Naive thymus-derived CD4-positive, alpha-beta T cell (primary cell): ENCODE measurements at regions of chr6 and their contacts with region 1.

Region 1: DNA sequence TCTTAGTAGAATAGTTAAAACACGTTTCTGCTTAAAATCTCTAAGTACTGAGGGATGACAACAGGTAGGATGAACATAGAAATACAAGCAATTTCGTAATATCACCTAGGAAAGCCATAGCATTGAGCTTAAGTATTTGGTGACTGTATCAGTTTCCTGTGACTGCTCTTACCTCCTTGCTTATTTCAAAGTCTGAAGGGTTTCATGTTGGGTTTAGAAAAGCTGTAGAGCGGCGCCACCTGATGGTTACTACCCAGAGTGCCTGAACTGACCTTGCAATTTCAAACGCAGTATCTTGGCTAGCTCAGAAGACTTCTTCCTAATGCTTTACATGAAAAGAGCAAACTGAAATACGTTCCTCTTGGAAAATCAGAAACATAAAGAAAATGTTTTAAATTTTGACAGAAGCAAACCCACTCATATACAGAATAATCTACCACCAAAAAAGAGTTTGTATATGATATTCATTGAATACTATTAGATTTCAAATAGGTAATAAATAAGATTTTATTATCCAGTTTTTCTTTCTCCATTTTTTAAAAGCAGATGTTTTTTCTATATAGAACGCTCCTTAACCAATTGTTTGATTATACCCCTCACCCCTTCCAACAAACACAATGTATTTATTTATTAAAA is 82.3 kb upstream of the RIPOR2 start:
- DNase-seq: peak; percentile 52 to 86 (median 81)
- ATAC-seq: peak; percentile 88
- H3K4me3 ChIP-seq: no peak overlapping the region
- H3K4me3 Mint-ChIP-seq: peak overlapping the region in 9 of 10 donors; percentile 35 to 79 (median 67)
- H3K27ac ChIP-seq: peak overlapping the region; percentile 61
- H3K27ac Mint-ChIP-seq: peak overlapping the region; percentile 40 to 98 (median 94)
- H3K4me1 ChIP-seq: peaks cover 9 to 34% of the 10 kb centered on the region in 2 donors
- H3K4me1 Mint-ChIP-seq: peaks cover 25 to 48% (median 39%) of the 10 kb centered on the region in 7 donors
- H3K27me3 ChIP-seq: no peaks in the 10 kb centered on the region
- H3K27me3 Mint-ChIP-seq: no peaks in the 10 kb centered on the region

Region 2: DNA sequence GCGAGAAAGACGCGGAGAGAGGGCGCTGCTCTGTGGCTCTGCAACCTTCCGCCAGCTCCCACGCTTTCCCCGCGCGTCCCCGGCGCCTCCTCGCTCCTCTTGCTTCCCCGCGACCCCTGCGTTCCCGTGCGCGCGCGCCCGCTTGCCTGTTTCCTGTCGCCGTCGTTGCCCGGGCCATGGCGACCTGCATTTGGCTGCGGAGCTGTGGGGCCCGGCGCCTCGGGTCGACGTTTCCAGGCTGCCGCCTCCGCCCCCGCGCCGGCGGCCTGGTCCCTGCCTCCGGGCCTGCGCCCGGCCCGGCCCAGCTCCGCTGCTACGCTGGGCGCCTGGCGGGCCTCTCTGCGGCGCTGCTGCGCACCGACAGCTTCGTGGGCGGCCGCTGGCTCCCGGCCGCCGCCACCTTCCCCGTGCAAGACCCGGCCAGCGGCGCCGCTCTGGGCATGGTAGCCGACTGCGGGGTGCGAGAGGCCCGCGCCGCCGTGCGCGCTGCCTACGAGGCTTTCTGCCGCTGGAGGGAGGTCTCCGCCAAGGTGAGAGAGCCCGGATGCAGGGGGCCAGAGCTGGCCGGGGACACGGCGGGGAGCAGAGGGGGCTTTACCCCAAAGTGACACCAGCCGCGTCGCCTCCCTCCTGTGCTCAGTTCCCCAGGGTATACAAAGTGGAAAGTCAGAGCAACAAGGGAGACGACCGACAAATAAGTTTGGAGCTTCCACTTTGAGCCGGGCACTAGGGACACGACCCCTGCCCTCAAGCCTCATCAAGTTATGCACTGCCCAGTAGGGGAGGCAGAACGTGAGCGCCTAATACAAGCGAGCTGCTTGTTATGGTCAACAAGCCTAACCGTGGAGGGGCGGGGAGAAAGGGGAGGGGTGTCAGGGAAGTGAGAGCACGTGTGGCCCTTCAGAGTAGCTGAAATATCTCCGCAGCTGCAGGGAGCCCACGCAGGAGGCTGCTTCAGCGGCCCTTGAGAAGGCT is 522.9 kb before region 1 on chr6 and contains the start of gene ALDH5A1:
- CTCF ChIA-PET with region 1: no interaction called
- POLR2A ChIA-PET with region 1: no interaction called
- intact Hi-C with region 1: loop called in 1 of 2 experiments (anchors 10 kb)
- DNase-seq: peak; percentile 63 to 86 (median 84)
- ATAC-seq: peak; percentile 89
- H3K4me3 ChIP-seq: peak within 1 kb of the TSS; percentile 74
- H3K4me3 Mint-ChIP-seq: peak within 1 kb of the TSS; percentile 84 to 91 (median 88)
- H3K27ac ChIP-seq: peak within 1 kb of the TSS; percentile 63
- H3K27ac Mint-ChIP-seq: peak within 1 kb of the TSS; percentile 30 to 88 (median 74)
- H3K4me1 ChIP-seq: peaks cover 12 to 15% of the 10 kb centered on the region in 2 donors
- H3K4me1 Mint-ChIP-seq: peaks cover 13 to 50% (median 31%) of the 10 kb centered on the region in 7 donors
- H3K27me3 ChIP-seq: no peaks in the 10 kb centered on the region
- H3K27me3 Mint-ChIP-seq: peaks cover 0 to 2% (median 0%) of the 10 kb centered on the region in 5 donors
- total RNA-seq, gene ALDH5A1: 5.7 to 20.6 (median 8.9) TPM

Region 3: DNA sequence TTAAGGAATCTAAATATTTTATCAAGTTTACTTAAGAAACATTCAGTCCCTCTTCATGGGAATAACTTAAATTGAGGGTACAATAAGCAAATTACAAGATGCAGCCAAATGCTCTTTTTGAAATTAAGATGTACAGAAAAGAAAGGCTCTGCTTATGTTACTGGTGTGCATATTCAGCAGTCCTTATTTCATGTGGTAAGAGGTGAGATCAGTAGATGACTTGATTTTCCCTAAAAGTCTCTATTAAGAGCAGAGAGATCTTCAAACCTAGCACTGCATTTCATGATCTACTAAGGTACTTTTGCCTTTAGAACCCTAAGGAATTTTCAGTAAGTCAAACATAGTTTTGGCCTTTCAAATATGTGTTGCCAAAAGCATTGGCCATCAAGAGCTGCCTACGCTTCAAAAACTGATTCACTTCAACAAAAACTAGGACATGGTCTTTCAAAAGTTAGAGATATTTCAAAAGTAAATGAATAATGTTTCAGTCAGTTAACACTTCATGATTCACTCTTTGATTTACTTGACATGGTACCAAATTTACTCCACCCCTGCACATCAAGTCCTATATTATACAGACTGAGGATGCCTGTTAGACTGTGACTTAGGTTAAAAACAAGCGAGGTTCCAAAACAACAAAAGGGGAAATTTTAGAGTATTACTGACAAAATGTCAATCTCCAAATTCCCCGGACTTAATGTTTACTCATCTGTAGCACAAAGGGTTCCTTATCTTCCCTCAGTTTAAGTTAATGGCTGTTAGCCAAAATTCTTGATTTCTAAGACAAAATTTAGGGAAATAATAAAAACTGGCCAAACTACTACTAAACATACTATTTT is 318.3 kb before region 1 on chr6:
- CTCF ChIA-PET with region 1: interaction called, 4 read pairs
- POLR2A ChIA-PET with region 1: no interaction called
- intact Hi-C with region 1: loop called in 1 of 2 experiments (anchors 5 kb)
- DNase-seq: no peak
- ATAC-seq: no peak
- H3K4me3 ChIP-seq: no peak overlapping the region
- H3K4me3 Mint-ChIP-seq: no peak overlapping the region
- H3K27ac ChIP-seq: no peak overlapping the region
- H3K27ac Mint-ChIP-seq: peak overlapping the region in 8 of 9 donors; percentile 14 to 68 (median 30)
- H3K4me1 ChIP-seq: no peaks in the 10 kb centered on the region
- H3K4me1 Mint-ChIP-seq: peaks cover 8 to 28% (median 17%) of the 10 kb centered on the region in 7 donors
- H3K27me3 ChIP-seq: no peaks in the 10 kb centered on the region
- H3K27me3 Mint-ChIP-seq: no peaks in the 10 kb centered on the region

Region 4: GRCh38 chr6:24855395-24856245 is 162.4 kb before region 1 on chr6:
- CTCF ChIA-PET with region 1: interaction called, 77 read pairs
- POLR2A ChIA-PET with region 1: interaction called, 21 read pairs
- intact Hi-C with region 1: loop called (anchors 1 kb)
- DNase-seq: peak; percentile 25 to 83 (median 74)
- ATAC-seq: peak; percentile 78
- H3K4me3 ChIP-seq: no peak overlapping the region
- H3K4me3 Mint-ChIP-seq: peak overlapping the region in 8 of 10 donors; percentile 48 to 89 (median 62)
- H3K27ac ChIP-seq: peak overlapping the region; percentile 72
- H3K27ac Mint-ChIP-seq: peak overlapping the region; percentile 86 to 99 (median 94)
- H3K4me1 ChIP-seq: peaks cover 47 to 59% of the 10 kb centered on the region in 2 donors
- H3K4me1 Mint-ChIP-seq: peaks cover 51 to 72% (median 66%) of the 10 kb centered on the region in 7 donors
- H3K27me3 ChIP-seq: no peaks in the 10 kb centered on the region
- H3K27me3 Mint-ChIP-seq: no peaks in the 10 kb centered on the region

Region 5: GRCh38 chr6:24949020-24949569 is 69.0 kb before region 1 on chr6:
- CTCF ChIA-PET with region 1: interaction called, 6 read pairs
- POLR2A ChIA-PET with region 1: interaction called, 14 read pairs
- intact Hi-C with region 1: loop called in 1 of 2 experiments (anchors 1 kb)
- DNase-seq: peak in 7 of 9 donors; percentile 67 to 93 (median 83)
- ATAC-seq: peak; percentile 72
- H3K4me3 ChIP-seq: peak overlapping the region; percentile 50
- H3K4me3 Mint-ChIP-seq: peak overlapping the region; percentile 71 to 86 (median 76)
- H3K27ac ChIP-seq: peak overlapping the region; percentile 75
- H3K27ac Mint-ChIP-seq: peak overlapping the region; percentile 92 to 98 (median 95)
- H3K4me1 ChIP-seq: peaks cover 62 to 68% of the 10 kb centered on the region in 2 donors
- H3K4me1 Mint-ChIP-seq: peaks cover 63 to 91% (median 75%) of the 10 kb centered on the region in 7 donors
- H3K27me3 ChIP-seq: no peaks in the 10 kb centered on the region
- H3K27me3 Mint-ChIP-seq: no peaks in the 10 kb centered on the region

Region 6: DNA sequence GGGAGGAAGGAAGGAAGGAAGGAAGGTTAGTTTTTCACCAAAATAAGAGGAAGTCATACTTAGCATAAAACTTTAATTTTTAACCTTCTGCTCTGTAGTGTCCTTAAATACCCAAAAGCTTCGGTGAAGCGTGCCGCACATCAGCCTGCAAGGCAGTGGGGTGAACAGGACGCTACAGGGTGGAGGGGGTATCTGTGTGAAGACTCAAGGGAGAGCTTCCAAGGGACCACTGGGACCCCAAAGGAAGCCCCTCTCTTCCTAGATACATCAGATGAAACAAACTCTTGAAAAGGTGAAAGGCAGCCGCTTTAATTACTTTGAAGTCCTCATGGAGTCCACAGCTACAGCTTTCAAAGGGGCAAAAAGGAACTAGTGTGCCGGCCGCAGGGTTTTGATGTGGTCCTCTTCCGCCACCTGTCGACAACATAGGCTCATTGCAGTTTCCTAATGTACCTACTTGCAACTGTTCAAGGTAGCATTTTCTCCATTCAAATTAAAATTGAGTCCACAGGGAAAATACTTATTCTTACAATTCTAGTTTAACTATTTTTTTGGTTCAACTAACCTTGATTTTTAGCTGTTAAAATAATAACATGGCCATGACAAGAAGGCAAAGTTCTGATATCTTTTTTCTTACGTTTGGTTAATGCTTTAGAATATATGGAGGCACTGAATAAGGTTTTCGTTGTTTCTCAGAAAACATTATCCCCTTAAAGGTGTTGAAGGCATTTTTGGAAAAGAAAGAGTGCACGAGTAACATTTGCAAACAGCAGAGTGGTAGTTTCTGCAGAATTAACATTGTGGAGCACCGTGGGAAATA is 52.7 kb after region 1 on chr6:
- CTCF ChIA-PET with region 1: interaction called, 21 read pairs
- POLR2A ChIA-PET with region 1: interaction called, 7 read pairs
- intact Hi-C with region 1: loop called (anchors 2 kb)
- DNase-seq: peak; percentile 54 to 85 (median 79)
- ATAC-seq: peak; percentile 99
- H3K4me3 ChIP-seq: no peak overlapping the region
- H3K4me3 Mint-ChIP-seq: peak overlapping the region in 8 of 10 donors; percentile 10 to 70 (median 50)
- H3K27ac ChIP-seq: no peak overlapping the region
- H3K27ac Mint-ChIP-seq: peak overlapping the region; percentile 43 to 92 (median 83)
- H3K4me1 ChIP-seq: peaks cover 0 to 3% of the 10 kb centered on the region in 2 donors
- H3K4me1 Mint-ChIP-seq: peaks cover 5 to 15% (median 9%) of the 10 kb centered on the region in 7 donors
- H3K27me3 ChIP-seq: no peaks in the 10 kb centered on the region
- H3K27me3 Mint-ChIP-seq: peaks cover 0 to 7% (median 0%) of the 10 kb centered on the region in 5 donors

Region 7: GRCh38 chr6:25107218-25107617 is 89.2 kb after region 1 on chr6:
- CTCF ChIA-PET with region 1: no interaction called
- POLR2A ChIA-PET with region 1: no interaction called
- intact Hi-C with region 1: no loop called
- DNase-seq: no peak
- ATAC-seq: no peak
- H3K4me3 ChIP-seq: no peak overlapping the region
- H3K4me3 Mint-ChIP-seq: no peak overlapping the region
- H3K27ac ChIP-seq: no peak overlapping the region
- H3K27ac Mint-ChIP-seq: no peak overlapping the region
- H3K4me1 ChIP-seq: no peaks in the 10 kb centered on the region
- H3K4me1 Mint-ChIP-seq: peaks cover 0 to 34% (median 0%) of the 10 kb centered on the region in 7 donors
- H3K27me3 ChIP-seq: no peaks in the 10 kb centered on the region
- H3K27me3 Mint-ChIP-seq: no peaks in the 10 kb centered on the region